GM12878 (cell line): ENCODE measurements at regions of chr20 and their contacts with region 1.

Region 1: DNA sequence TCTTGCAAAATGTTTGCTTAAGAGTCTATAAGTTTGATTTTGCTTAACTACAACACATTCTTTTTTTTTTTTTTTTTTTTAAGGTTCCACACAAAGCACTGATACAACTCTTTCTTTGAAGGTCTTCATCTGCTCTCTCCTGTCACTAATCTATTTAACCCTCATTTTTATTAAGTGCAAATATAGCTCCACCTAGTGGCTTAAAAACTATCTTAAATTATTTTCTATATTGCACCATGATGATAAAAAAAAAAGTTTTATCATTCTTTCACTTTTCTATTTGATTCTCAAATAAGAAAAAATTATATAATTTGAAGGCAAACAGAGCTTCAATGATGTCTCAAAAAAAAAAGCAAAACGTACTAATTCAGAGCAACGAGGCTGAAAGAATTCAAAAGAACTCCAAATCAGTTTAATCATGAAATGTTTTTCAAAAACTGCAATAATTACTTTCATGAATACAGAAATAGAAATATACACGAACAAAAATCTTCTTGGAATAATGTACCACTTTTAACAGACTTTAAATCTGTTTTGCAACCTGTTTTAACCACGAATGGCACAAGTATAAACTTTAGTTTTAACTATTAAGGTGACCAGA is 12.8 kb downstream of the ESF1 start:
- DNase-seq: no peak
- ATAC-seq: peak; percentile 64
- H3K4me3 ChIP-seq: no peak overlapping the region
- H3K27ac ChIP-seq: no peak overlapping the region
- H3K4me1 ChIP-seq: 0 out of 2 replicates have a peak, but pooled peaks cover 3% of the 10 kb centered on the region
- H3K27me3 ChIP-seq: no peaks in the 10 kb centered on the region
- CTCF ChIP-seq: peak in 2 of 3 experiments; percentile 20 to 43; a peak in 2 of 6 replicates
- EP300 ChIP-seq: no peak
- POLR2A ChIP-seq: no peak
- RAD21 ChIP-seq: peak; percentile 53

Region 2: GRCh38 chr20:13373400-13373799 is 398.6 kb before region 1 on chr20:
- CTCF ChIA-PET with region 1: no interaction called
- POLR2A ChIA-PET with region 1: no interaction called
- RAD21 ChIA-PET with region 1: no interaction called
- SMC1A ChIA-PET with region 1: no interaction called
- in situ Hi-C with region 1: no loop called
- intact Hi-C with region 1: no loop called
- DNase-seq: no peak
- ATAC-seq: no peak
- H3K4me3 ChIP-seq: no peak overlapping the region
- H3K27ac ChIP-seq: no peak overlapping the region
- H3K4me1 ChIP-seq: no peaks in the 10 kb centered on the region
- H3K27me3 ChIP-seq: no peaks in the 10 kb centered on the region
- CTCF ChIP-seq: no peak
- EP300 ChIP-seq: no peak
- POLR2A ChIP-seq: no peak
- RAD21 ChIP-seq: no peak

Region 3: DNA sequence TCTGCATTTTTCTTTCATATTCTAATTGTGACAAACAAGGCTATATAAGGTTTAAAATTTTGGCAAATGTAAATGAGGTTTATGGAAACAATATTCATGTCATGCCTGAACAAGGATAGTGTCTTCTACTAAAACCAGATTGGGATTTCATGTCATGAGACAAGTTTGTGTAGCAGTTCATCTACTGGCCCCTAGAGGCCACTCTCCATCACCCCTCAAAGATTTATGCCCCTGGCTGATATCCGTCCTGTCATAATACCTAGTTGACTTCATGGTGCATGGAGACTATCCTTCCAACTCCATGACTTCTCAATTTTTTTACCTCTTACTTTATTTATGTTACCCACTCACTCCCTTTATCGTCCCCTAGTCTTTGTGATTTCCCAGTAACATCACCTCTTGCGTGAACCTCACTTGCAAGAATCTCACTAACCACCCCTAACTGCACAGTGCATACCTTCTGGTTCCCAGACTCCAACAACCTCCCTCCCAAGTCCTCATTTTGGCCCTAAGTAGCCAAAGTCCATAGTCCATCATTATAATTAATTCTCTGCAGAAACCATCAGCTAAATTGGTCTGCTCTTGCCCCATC is 313.0 kb before region 1 on chr20:
- CTCF ChIA-PET with region 1: interaction called, 13 read pairs
- POLR2A ChIA-PET with region 1: no interaction called
- RAD21 ChIA-PET with region 1: interaction called, 4 read pairs
- SMC1A ChIA-PET with region 1: no interaction called
- in situ Hi-C with region 1: loop called (anchors 25 kb)
- intact Hi-C with region 1: no loop called
- DNase-seq: no peak
- ATAC-seq: peak; percentile 91
- H3K4me3 ChIP-seq: no peak overlapping the region
- H3K27ac ChIP-seq: no peak overlapping the region
- H3K4me1 ChIP-seq: no peaks in the 10 kb centered on the region
- H3K27me3 ChIP-seq: no peaks in the 10 kb centered on the region
- CTCF ChIP-seq: peak; percentile 72 to 89 (median 89)
- EP300 ChIP-seq: no peak
- POLR2A ChIP-seq: no peak
- RAD21 ChIP-seq: peak; percentile 74

Region 4: DNA sequence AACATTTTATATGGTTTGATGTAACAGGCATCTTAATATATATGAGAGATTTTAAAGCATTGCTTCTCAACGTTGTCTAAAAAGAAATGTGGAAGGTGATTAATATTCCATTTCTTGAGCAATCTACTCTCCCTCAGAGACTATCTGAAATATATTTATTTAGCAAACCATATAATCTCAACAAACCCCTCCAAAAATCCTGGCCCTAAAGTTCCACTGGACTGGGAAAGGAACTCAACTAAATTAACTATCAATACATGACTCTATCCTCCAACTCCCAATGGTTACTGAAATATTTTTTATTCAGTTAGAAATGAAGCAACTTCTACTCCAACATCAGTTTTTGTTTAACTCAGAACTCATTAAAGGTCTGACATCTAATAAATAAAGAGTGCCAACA is 139.5 kb before region 1 on chr20:
- CTCF ChIA-PET with region 1: interaction called, 15 read pairs
- POLR2A ChIA-PET with region 1: no interaction called
- RAD21 ChIA-PET with region 1: no interaction called
- SMC1A ChIA-PET with region 1: no interaction called
- in situ Hi-C with region 1: no loop called
- intact Hi-C with region 1: no loop called
- DNase-seq: no peak
- ATAC-seq: no peak
- H3K4me3 ChIP-seq: no peak overlapping the region
- H3K27ac ChIP-seq: no peak overlapping the region
- H3K4me1 ChIP-seq: no peaks in the 10 kb centered on the region
- H3K27me3 ChIP-seq: no peaks in the 10 kb centered on the region
- CTCF ChIP-seq: no peak
- EP300 ChIP-seq: no peak
- POLR2A ChIP-seq: no peak
- RAD21 ChIP-seq: no peak

Region 5: DNA sequence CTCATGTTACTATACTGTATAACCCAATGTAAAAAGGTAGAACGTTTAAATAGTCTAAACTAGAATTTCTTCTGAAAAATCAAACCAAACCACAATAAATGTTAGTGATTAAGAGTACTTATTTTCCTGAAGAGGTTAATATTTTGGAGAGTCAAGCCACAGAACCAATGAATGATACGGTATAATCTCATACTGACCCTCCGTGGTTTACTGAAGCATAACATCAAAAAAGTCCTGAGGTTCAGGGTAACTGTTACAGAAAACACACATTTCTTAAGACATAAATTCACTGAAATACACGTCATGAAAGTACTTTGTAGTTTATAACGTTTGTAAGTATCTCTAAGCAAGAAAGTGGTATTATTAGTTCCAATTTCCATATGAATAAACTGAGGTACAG is 16.1 kb before region 1 on chr20:
- CTCF ChIA-PET with region 1: interaction called, 25 read pairs
- POLR2A ChIA-PET with region 1: no interaction called
- RAD21 ChIA-PET with region 1: interaction called, 7 read pairs
- SMC1A ChIA-PET with region 1: interaction called, 7 read pairs
- in situ Hi-C with region 1: no loop called
- intact Hi-C with region 1: no loop called
- DNase-seq: no peak
- ATAC-seq: no peak
- H3K4me3 ChIP-seq: no peak overlapping the region
- H3K27ac ChIP-seq: no peak overlapping the region
- H3K4me1 ChIP-seq: no peaks in the 10 kb centered on the region; the same call in 1 of the 2 replicates
- H3K27me3 ChIP-seq: no peaks in the 10 kb centered on the region
- CTCF ChIP-seq: no peak
- EP300 ChIP-seq: no peak
- POLR2A ChIP-seq: no peak
- RAD21 ChIP-seq: no peak

Region 6: DNA sequence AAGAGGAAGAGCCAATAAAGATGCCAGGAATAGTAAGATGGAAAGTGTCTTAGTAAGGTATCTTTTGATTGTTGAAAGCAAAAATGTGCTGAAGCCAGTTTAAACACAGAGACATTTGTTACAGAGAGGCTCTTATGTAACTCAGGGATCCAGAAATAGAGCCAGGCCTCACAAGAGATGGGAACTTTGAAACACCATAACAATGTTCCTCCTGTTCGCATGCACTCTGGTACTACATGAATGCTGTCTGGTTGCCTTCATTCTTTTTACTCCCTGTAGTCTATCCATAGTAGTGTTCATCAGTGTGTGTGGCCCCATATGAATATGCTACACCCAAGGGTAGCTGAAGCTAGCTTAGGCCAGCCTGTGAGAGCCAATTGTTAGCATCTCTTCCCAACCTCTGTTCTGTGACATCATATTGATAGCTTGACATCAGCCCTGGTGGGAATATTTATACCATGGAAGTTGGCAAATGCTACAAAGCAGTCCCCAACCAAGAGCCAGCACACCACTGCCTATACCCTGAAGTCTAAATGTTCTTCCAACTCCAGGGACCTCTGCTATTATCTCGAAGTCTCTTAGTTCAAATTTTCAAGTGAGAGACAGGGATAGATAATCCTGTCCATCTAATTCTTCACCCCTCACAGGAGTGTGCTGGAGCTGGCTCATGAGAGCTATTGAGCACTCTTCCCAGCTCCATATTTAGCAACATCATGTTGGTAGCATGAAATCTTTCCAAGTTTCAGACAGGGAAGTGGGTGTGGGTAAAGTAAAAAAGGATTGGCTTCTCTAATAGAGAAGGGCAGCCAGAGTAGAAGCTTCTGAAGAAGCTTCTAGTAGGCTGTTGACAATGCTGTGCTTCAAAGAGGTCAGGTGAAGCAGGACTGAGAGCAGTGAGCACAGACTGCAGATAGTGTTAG is 19.8 kb after region 1 on chr20:
- CTCF ChIA-PET with region 1: interaction called, 40 read pairs
- POLR2A ChIA-PET with region 1: interaction called, 4 read pairs
- RAD21 ChIA-PET with region 1: interaction called, 23 read pairs
- SMC1A ChIA-PET with region 1: interaction called, 34 read pairs
- in situ Hi-C with region 1: no loop called
- intact Hi-C with region 1: no loop called
- DNase-seq: no peak
- ATAC-seq: no peak
- H3K4me3 ChIP-seq: no peak overlapping the region
- H3K27ac ChIP-seq: no peak overlapping the region
- H3K4me1 ChIP-seq: no peaks in the 10 kb centered on the region; the same call in 1 of the 2 replicates
- H3K27me3 ChIP-seq: no peaks in the 10 kb centered on the region
- CTCF ChIP-seq: no peak
- EP300 ChIP-seq: no peak
- POLR2A ChIP-seq: no peak
- RAD21 ChIP-seq: no peak